ENCODE measurements at regions of chr15 and their contacts with region 1.

Region 1: GRCh38 chr15:98518823-98519561 is 129.3 kb upstream of the IGF1R start:
- DNase-seq: peak; percentile 65
- H3K4me3 Mint-ChIP-seq: no peak overlapping the region
- H3K27ac Mint-ChIP-seq: no peak overlapping the region
- H3K4me1 Mint-ChIP-seq: peaks cover 5% of the 10 kb centered on the region
- H3K27me3 Mint-ChIP-seq: peaks cover 5% of the 10 kb centered on the region

Region 2: DNA sequence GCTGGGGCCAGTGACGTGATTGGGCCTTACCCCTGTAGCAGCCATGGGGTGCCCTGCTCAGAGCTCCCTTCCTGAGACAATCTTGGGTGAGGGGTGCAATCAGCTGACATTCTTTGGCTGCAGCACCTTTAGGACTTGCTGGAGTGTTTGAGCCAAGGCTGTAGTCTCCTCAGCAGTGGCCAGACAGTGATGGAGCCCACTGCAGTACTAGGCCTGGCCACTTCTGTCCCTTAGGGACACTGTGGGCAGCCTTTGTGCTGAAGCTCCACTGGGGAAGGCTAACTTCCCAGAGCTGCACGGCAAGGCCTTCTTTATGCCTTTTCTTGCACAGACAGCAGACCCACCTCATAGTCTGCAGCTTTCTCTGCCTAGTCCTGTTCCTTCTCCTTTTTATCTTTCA is 155.6 kb before region 1 on chr15:
- CTCF ChIA-PET with region 1: no interaction called
- intact Hi-C with region 1: no loop called
- DNase-seq: no peak
- H3K4me3 Mint-ChIP-seq: no peak overlapping the region
- H3K27ac Mint-ChIP-seq: no peak overlapping the region
- H3K4me1 Mint-ChIP-seq: no peaks in the 10 kb centered on the region
- H3K27me3 Mint-ChIP-seq: peaks cover 11% of the 10 kb centered on the region

Region 3: DNA sequence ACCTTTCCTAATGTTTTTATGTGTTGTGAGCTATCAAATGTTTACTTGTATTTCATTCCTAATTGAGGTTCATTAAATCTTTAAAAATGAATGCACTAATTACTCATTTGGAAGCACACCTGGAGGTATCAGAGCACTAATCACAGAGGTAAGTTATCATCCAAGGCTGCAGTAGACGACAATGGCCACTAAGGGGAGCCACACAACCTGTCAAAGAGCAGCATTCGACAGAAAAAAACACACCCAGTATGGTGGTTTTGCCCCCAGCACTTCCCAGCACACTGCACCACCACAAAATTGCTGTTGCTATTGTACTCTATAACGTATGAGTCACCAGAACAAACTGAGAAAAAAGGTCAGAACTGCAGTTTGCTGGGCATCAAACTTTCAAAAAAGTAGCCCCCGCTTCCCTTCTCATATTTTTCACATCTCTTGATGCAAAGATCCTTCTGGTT is 76.6 kb before region 1 on chr15:
- CTCF ChIA-PET with region 1: no interaction called
- intact Hi-C with region 1: loop called (anchors 2 kb)
- DNase-seq: peak; percentile 83
- H3K4me3 Mint-ChIP-seq: no peak overlapping the region
- H3K27ac Mint-ChIP-seq: no peak overlapping the region
- H3K4me1 Mint-ChIP-seq: peaks cover 2% of the 10 kb centered on the region
- H3K27me3 Mint-ChIP-seq: peaks cover 17% of the 10 kb centered on the region

Region 4: DNA sequence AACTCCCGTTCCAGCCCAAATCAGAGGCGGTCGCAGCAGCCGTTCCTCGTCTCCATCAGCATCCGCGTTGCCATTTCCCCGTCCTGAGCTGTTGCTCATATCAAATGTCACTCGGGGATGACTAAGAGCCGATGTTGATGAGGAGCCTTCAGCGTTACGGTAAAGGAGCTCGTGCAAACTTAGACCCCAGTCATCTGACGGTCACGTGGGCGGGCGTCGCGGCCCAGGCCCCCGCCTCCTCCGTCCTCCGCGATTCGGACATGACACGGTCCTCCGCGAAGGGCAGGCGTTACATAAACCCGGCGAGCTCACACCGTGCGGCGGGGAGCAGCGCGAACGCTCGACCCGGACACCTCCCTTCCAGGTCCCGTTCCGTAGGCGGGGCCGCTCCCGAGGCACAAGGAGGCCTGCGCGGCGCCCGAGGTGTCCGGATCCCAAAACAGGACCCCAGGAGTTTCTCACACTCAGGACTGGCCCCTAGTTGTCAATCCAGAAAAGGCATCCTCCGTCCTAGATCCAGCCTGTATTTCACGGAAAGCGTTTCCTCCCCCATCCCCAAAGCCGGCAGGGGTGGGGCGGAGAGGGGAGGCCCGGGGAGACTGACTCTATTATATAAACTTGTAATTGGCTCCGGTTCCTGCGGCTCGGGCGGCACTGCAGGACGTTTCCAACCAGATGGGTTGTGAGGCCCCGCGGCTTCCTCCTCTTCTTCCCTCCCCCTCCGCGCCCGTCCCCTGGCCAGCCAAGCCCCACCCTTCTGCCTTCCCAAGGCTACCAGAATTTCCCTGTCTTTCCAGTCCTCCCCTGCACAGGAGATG is 29.4 kb after region 1 on chr15:
- CTCF ChIA-PET with region 1: interaction called, 7 read pairs
- intact Hi-C with region 1: loop called (anchors 2 kb)
- DNase-seq: peak; percentile 83
- H3K4me3 Mint-ChIP-seq: peak overlapping the region; percentile 90
- H3K27ac Mint-ChIP-seq: peak overlapping the region; percentile 83
- H3K4me1 Mint-ChIP-seq: peaks cover 16% of the 10 kb centered on the region
- H3K27me3 Mint-ChIP-seq: peaks cover 28% of the 10 kb centered on the region

Region 5: DNA sequence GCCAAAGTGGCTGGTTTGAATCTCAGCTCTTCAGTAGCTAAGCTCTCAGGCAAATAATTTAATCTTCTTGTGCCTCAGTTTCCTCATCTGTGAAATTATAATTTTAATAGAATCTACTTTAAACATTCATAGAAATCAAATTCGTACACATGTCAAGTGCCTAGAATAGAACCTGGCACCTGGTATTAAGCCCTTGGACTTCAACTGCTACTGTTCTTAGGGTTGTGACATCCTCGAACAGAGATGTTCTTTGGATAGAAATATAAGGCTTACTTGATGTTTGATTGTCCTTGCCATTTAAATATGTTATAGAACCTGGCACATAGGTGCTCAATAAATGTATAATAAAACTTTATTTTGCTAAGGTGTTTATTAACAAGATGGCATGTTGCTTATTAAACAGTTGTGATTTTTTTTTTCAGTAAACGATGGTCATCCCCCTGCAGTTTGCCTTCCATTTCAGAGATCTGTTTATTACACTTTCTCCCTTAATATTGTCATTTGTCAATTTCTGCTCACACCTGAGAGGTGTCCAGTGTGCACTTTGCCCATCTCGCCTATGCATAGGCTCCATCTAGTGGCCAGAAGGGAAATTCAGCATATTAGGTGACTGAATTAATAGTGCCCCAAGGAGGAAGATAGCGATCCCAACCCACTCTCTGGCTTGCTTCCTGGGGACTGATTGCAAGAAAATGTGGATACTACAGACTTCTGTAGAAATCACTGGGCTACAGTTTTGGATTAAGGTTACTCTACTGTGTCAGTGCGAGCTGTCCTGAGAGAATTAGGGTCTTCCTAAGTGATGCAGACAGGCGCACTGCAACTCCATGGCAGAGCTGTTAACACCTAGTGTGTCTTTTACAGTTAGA is 140.1 kb after region 1 on chr15:
- CTCF ChIA-PET with region 1: interaction called, 129 read pairs
- intact Hi-C with region 1: loop called (anchors 1 kb)
- DNase-seq: peak; percentile 45
- H3K4me3 Mint-ChIP-seq: no peak overlapping the region
- H3K27ac Mint-ChIP-seq: no peak overlapping the region
- H3K4me1 Mint-ChIP-seq: peaks cover 52% of the 10 kb centered on the region
- H3K27me3 Mint-ChIP-seq: no peaks in the 10 kb centered on the region

Region 6: DNA sequence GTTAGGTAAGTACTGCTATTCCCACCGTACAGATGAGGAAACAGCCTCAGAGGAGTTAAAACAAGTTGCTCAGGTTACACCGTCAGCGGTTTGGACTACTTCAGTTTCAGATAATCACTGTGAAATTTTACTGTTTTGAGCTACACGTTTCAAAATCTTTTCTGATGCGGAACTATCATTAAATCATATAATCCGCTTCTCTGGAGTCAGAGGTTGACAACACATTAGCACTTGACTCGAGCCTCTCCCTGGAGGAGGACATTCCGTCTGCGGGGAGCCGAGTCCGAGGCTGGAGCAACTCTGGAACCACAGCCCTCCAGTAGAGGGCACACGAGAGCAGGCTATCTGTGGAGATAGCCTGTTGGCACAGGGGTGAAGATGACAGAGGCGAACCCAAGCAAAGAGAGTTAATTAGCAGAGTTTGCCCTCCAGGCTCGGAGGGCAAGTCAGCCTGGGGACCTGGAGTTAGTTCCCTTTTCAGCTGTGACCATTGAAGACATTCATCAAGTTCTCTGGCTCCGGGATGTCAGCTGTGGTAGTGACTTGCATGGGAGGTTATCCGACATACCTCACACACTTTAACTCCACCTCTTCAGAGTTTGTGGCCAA is 260.6 kb after region 1 on chr15:
- CTCF ChIA-PET with region 1: interaction called, 13 read pairs
- intact Hi-C with region 1: no loop called
- DNase-seq: peak; percentile 86
- H3K4me3 Mint-ChIP-seq: peak overlapping the region; percentile 51
- H3K27ac Mint-ChIP-seq: no peak overlapping the region
- H3K4me1 Mint-ChIP-seq: peaks cover 49% of the 10 kb centered on the region
- H3K27me3 Mint-ChIP-seq: no peaks in the 10 kb centered on the region

Region 7: GRCh38 chr15:98904544-98904943 is 385.6 kb after region 1 on chr15:
- CTCF ChIA-PET with region 1: interaction called, 6 read pairs
- intact Hi-C with region 1: loop called (anchors 5 kb)
- DNase-seq: peak; percentile 36
- H3K4me3 Mint-ChIP-seq: no peak overlapping the region
- H3K27ac Mint-ChIP-seq: no peak overlapping the region
- H3K4me1 Mint-ChIP-seq: peaks cover 14% of the 10 kb centered on the region
- H3K27me3 Mint-ChIP-seq: no peaks in the 10 kb centered on the region

Region 8: GRCh38 chr15:99076552-99077308 is 557.7 kb after region 1 on chr15:
- CTCF ChIA-PET with region 1: interaction called, 5 read pairs
- intact Hi-C with region 1: loop called (anchors 1 kb)
- DNase-seq: peak; percentile 61
- H3K4me3 Mint-ChIP-seq: peak overlapping the region; percentile 72
- H3K27ac Mint-ChIP-seq: no peak overlapping the region
- H3K4me1 Mint-ChIP-seq: peaks cover 7% of the 10 kb centered on the region
- H3K27me3 Mint-ChIP-seq: peaks cover 9% of the 10 kb centered on the region

Measured in activated naive CD4-positive, alpha-beta T cell treated with anti-CD3 and anti-CD28 coated beads for 36 hours (primary cell).